Activated naive CD4-positive, alpha-beta T cell treated with anti-CD3 and anti-CD28 coated beads for 36 hours (primary cell): ENCODE measurements at regions of chr7 and their contacts with region 1.

Region 1: GRCh38 chr7:50206453-50207250 is 97.9 kb upstream of the IKZF1 start:
- DNase-seq: peak; percentile 92
- H3K4me3 Mint-ChIP-seq: peak overlapping the region; percentile 51
- H3K27ac Mint-ChIP-seq: peak overlapping the region; percentile 92
- H3K4me1 Mint-ChIP-seq: peaks cover 86% of the 10 kb centered on the region
- H3K27me3 Mint-ChIP-seq: no peaks in the 10 kb centered on the region

Region 2: DNA sequence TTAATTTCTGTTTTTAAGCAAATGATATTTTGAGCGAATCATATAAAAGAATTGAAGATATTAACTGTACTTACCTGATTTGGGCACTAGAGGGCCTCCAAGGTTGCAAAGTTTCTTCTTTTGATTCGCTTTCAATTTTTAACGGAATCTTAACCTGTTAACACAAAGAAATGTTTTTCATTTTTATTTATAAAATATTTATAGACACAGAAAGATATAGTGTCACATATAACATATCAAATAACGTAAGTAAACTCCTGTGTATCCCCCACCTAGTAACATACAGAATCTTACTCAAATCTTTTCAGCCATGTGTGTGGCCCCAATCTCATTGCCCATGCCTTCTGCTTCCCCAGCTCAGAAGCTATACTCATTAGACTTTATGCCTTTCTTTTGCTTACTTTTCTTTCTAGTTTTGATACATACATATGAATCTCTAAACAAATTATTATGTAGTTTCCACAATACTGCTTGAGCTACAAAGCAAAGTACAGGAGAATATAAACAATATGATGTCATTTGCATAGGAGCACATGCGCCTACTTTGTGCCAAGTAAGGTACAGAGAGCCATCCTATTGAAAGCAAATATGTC is 64.1 kb before region 1 on chr7:
- CTCF ChIA-PET with region 1: interaction called, 55 read pairs
- intact Hi-C with region 1: loop called (anchors 1 kb)
- DNase-seq: peak; percentile 64
- H3K4me3 Mint-ChIP-seq: peak overlapping the region; percentile 45
- H3K27ac Mint-ChIP-seq: peak overlapping the region; percentile 82
- H3K4me1 Mint-ChIP-seq: peaks cover 43% of the 10 kb centered on the region
- H3K27me3 Mint-ChIP-seq: no peaks in the 10 kb centered on the region

Region 3: DNA sequence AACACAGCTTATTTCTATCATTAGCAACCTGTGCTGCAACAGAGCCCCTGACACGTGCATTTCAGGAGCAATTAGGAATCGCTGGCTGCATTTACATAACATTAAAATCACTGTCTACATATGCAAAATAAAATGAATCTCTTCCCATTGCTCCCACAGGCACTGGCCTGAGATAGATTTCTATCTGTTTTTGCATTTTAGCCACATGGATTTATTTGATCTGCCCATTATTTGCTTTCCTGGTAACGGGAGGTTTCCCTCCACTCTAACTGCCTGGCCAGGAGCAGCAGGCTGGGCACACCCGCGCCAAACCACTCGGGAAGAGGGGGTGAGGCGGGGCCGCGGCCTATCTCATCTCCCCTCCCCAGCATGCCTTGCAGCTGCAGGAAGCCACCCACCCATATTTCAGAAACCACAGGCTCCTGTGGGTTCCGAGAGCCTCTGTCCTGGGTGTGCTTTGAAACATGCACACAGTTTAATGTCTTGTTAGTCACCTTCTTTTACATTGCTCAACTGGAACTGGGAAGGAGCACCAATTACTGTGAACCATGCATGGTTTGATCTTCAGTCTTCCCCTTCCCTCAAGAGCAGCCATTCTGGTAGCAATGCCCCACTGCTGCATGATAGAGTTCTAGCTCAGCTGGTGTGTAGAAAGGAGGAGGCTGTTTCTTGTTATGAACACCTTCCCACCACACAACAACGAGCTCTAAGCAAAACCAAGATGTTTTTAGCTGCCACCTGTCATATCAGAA is 60.2 kb after region 1 on chr7:
- CTCF ChIA-PET with region 1: interaction called, 51 read pairs
- intact Hi-C with region 1: loop called (anchors 1 kb)
- DNase-seq: peak; percentile 84
- H3K4me3 Mint-ChIP-seq: peak overlapping the region; percentile 55
- H3K27ac Mint-ChIP-seq: peak overlapping the region; percentile 94
- H3K4me1 Mint-ChIP-seq: peaks cover 91% of the 10 kb centered on the region
- H3K27me3 Mint-ChIP-seq: no peaks in the 10 kb centered on the region

Region 4: DNA sequence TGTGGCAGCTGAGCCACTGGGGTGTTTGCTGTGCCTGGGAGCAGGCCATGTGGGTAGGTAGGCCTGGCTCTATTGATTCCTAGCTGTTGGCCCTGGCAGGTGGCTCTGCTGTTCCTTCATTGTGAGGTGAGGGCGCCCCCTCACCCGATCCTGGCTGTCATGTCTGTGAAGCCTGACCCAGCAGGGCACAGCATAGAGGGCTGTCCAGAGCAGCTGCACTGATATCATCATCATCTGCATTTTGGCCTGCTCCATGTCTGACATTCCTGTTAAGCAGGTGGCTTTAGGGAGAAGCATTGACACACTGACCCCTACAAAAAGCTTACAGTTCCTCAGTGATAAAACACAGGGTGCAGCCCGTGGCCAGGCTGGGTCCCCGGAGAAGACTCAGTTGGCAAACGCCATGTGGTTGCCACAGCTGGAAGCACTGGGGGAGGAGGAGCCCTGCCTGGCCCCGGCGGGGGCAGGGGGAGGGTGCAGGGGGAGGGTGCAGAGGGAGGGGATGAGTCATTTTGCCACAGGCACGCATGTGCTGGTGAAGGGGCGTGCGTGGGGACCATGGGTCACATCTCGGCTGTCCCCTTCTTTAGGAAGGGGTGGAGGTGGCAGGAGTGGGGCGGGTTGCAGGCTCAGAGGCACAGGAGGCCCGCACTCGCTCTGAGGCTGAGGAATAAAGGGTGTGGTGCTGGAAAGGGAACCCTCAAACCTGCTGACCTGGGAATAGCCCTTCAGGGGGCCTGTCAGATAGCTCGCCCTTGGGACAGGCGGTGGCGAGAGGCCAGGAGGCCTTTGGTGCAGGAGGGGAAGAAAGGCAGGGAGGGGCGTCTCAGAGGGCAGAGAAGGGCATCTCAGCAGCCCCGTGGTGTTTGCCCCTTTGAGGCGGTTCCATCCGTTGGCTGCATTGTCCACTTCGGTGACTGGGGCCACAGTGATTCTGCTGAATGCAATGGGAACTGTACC is 129.4 kb after region 1 on chr7:
- CTCF ChIA-PET with region 1: interaction called, 96 read pairs
- intact Hi-C with region 1: loop called (anchors 1 kb)
- DNase-seq: peak; percentile 91
- H3K4me3 Mint-ChIP-seq: no peak overlapping the region
- H3K27ac Mint-ChIP-seq: no peak overlapping the region
- H3K4me1 Mint-ChIP-seq: peaks cover 2% of the 10 kb centered on the region
- H3K27me3 Mint-ChIP-seq: no peaks in the 10 kb centered on the region

Region 5: DNA sequence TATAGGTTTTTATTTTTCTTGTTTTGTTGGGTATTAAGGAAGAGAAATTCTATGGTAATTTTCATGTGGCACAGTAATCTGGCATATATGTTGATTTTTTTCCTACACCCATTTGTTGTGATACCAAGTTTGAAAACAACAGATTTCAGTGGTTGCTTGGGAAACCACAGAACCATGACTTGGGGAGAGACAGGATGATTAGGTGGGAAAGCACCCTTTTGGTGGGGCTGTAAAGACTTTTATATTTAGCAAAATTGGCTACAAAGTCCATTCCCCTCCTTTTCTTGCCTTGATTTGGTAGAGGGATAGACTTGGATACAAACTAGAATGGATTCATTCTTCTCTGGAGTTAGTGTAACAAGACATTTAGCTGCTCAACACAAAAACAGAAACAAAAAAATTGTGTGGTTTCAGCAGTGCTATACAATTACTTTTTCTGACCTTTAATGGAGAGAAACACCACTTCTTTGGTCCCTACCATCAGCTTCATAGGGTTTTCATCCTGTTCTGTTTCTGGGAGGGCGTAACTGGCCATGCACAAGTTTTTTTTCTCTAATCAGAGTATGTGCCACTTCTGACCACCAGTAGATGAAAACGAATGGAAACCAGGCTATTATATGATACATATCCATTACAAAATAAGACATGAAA is 190.8 kb after region 1 on chr7:
- CTCF ChIA-PET with region 1: interaction called, 10 read pairs
- intact Hi-C with region 1: loop called (anchors 1 kb)
- DNase-seq: peak; percentile 60
- H3K4me3 Mint-ChIP-seq: no peak overlapping the region
- H3K27ac Mint-ChIP-seq: peak overlapping the region; percentile 78
- H3K4me1 Mint-ChIP-seq: peaks cover 81% of the 10 kb centered on the region
- H3K27me3 Mint-ChIP-seq: no peaks in the 10 kb centered on the region

Region 6: GRCh38 chr7:50664461-50664922 is 457.8 kb after region 1 on chr7:
- CTCF ChIA-PET with region 1: no interaction called
- intact Hi-C with region 1: loop called (anchors 5 kb)
- DNase-seq: peak; percentile 47
- H3K4me3 Mint-ChIP-seq: no peak overlapping the region
- H3K27ac Mint-ChIP-seq: no peak overlapping the region
- H3K4me1 Mint-ChIP-seq: peaks cover 62% of the 10 kb centered on the region
- H3K27me3 Mint-ChIP-seq: no peaks in the 10 kb centered on the region